Activated CD8-positive, alpha-beta T cell treated with anti-CD3 and anti-CD28 coated beads, Interleukin-2, amount 10 ng/mL, durations not matched to agents 7 days and 5 days (primary cell): ENCODE measurements at regions of chr3 and their contacts with region 1.

Region 1: GRCh38 chr3:46976326-46977190 is at the start of gene CCDC12:
- DNase-seq: peak; percentile 97
- ATAC-seq: peak; percentile 84
- H3K4me3 Mint-ChIP-seq: peak within 1 kb of the TSS; percentile 94
- H3K27ac Mint-ChIP-seq: peak within 1 kb of the TSS; percentile 95
- H3K4me1 Mint-ChIP-seq: peaks cover 66% of the 10 kb centered on the region
- H3K27me3 Mint-ChIP-seq: no peaks in the 10 kb centered on the region
- total RNA-seq, gene CCDC12: 59.4 to 62.2 TPM

Region 2: DNA sequence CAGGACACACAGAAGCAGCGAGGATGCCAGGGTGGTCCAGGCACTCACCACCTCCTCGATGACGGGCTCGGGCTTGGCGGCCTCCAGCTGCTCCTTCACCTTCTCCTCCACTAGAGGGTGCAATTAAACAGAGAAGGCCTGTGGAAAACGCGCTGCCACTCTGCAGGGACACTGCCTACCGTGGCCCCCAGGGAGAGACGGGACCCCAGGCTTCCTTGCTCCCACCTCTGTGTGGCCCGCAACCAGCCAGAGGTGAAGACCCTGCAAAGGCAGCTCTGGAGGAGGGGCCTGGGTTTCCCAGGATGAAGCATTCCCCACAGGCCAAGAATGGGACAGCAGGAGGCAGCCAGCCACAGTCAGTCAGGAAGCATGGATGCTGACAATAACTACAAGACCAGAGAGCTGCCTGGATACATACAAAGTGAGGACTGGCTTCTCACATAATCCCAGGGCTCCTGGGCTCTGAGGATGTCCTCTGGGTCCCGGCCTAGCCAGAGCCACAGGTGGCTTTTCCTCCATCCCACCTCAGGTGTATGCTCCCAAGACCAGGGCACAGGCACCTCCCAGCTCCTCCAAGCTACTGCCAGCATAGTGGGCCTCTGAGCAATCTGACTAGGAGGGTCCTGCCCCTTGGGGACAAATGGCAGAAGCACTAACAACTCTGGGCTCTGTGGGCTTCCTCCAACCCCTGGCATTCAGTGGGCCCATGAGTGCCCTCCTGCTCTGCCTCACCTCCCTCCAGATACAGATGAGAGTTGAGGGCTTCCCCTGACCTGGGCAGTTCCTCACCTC is 52.8 kb before region 1 on chr3:
- CTCF ChIA-PET with region 1: interaction called, 14 read pairs
- POLR2A ChIA-PET with region 1: interaction called, 3 read pairs
- DNase-seq: peak; percentile 61
- ATAC-seq: peak; percentile 41
- H3K4me3 Mint-ChIP-seq: no peak overlapping the region
- H3K27ac Mint-ChIP-seq: peak overlapping the region; percentile 52
- H3K4me1 Mint-ChIP-seq: peaks cover 52% of the 10 kb centered on the region
- H3K27me3 Mint-ChIP-seq: no peaks in the 10 kb centered on the region

Region 3: DNA sequence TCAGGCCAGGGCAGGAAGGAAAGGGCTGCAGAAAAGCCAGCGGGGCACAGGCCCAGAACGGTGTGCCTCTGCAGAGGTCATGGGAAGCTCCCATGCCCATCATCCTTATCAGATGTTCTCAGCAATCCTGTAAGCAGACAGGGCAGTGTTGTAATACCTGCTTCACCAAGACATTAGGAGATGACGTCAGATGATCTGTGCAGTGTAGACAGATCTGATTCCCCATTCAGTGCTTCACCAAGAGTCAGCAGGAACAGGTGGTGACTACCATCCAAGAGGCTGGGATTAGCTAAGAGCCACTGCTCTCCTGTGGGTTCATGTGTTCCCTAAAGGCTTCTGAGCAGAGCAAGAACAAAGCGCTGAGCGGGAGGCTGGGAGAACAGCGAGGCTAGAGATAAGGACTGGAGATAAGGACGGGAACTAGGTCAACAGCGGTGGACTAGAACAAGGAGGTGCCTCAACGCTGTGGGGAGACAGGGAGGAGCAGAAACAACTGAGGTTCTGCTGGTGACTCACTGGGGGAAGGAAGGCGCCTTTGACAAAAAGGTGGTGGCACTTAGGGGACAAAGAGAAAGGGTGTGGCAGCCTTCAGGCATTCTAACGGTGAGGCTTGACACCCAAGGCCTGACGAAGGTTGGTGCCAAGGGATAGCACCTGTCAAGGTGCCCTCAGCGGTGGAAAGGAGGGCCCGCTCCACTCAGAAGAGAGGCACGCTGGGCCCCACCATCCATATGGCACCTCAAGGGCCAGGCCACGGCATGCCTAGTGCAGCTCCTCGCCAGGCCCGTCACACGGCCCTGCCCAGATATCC is 28.4 kb before region 1 on chr3:
- CTCF ChIA-PET with region 1: no interaction called
- POLR2A ChIA-PET with region 1: interaction called, 19 read pairs
- DNase-seq: peak; percentile 82
- ATAC-seq: peak; percentile 82
- H3K4me3 Mint-ChIP-seq: peak overlapping the region; percentile 62
- H3K27ac Mint-ChIP-seq: peak overlapping the region; percentile 82
- H3K4me1 Mint-ChIP-seq: peaks cover 89% of the 10 kb centered on the region
- H3K27me3 Mint-ChIP-seq: no peaks in the 10 kb centered on the region

Region 4: GRCh38 chr3:46959161-46959511 is 17.4 kb before region 1 on chr3:
- CTCF ChIA-PET with region 1: interaction called, 4 read pairs
- POLR2A ChIA-PET with region 1: interaction called, 12 read pairs
- DNase-seq: no peak
- ATAC-seq: peak; percentile 57
- H3K4me3 Mint-ChIP-seq: no peak overlapping the region
- H3K27ac Mint-ChIP-seq: peak overlapping the region; percentile 83
- H3K4me1 Mint-ChIP-seq: peaks cover 82% of the 10 kb centered on the region
- H3K27me3 Mint-ChIP-seq: no peaks in the 10 kb centered on the region

Region 5: GRCh38 chr3:46987743-46988401 is 11.3 kb after region 1 on chr3:
- CTCF ChIA-PET with region 1: no interaction called
- POLR2A ChIA-PET with region 1: interaction called, 22 read pairs
- DNase-seq: peak; percentile 96
- ATAC-seq: peak; percentile 97
- H3K4me3 Mint-ChIP-seq: peak overlapping the region; percentile 80
- H3K27ac Mint-ChIP-seq: peak overlapping the region; percentile 93
- H3K4me1 Mint-ChIP-seq: peaks cover 69% of the 10 kb centered on the region
- H3K27me3 Mint-ChIP-seq: no peaks in the 10 kb centered on the region